ENCODE measurements at regions of chr5 and their contacts with region 1.

Region 1: DNA sequence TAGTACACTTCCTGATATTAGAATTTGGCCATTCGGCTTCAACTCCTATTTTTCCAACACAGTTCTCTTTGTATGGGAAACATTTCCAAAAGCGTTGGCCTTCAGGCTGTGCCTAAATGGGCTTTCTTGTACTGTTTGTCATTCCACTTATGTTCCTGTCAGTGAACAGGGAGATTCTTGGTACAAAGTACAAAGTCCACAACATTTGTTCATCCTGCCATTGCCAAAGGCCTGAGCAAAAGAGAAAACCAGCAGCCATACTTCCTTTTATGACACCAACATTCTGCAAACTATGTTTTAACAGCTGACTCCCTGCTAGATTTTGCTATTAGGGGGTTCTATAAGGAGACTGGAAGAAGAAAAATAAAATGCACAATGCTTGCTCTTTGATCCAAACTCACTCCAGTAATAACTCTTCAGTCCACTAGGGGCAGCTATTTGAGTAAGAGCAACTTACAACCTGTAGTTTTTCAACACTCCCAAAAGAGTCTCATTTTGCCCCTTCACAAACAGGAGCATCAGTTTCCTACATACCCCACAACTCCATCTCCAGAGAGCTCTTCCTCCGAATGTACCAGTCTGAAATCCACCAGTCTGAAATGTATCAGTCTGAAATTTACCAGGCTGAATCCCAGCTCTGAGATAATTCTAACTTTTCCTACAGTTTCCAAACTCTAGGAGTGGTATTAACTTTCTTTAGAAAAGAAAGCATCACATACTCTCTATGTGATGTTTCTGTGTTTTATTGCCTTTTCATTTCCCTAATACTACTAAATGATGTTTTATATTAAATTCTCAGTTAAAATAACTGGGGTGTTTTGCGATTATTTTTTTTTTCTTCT is 693.8 kb downstream of the DNAH5 start:
- DNase-seq: peak; percentile 39
- H3K4me3 ChIP-seq: no peak overlapping the region
- H3K27ac ChIP-seq: peak overlapping the region; percentile 94
- H3K4me1 ChIP-seq: peaks cover 44% of the 10 kb centered on the region
- H3K27me3 ChIP-seq: no peaks in the 10 kb centered on the region
- CTCF ChIP-seq: peak; percentile 51 to 58
- POLR2A ChIP-seq: no peak

Region 2: DNA sequence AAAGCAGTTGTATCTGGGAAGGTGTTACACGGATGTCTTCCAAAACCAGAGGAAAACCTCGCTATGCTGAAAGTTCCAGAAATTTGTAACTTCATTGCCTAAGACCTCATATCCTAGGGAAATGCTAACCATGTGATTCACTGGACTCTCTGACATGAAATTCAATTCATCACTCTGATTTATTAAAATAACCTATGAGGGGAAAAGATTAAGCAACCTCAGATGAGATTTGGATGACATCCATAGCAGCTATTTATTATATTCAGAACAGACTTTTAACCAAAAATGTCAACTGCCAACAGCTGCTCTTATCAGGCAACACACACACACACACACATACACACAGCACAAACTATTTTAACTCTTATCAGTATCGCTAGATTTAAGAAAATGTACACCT is 340.0 kb before region 1 on chr5:
- CTCF ChIA-PET with region 1: interaction called, 5 read pairs
- POLR2A ChIA-PET with region 1: no interaction called
- dilution Hi-C with region 1: no loop called
- intact Hi-C with region 1: loop called (anchors 1 kb)
- DNase-seq: peak; percentile 84
- H3K4me3 ChIP-seq: no peak overlapping the region
- H3K27ac ChIP-seq: peak overlapping the region; percentile 70
- H3K4me1 ChIP-seq: peaks cover 14% of the 10 kb centered on the region
- H3K27me3 ChIP-seq: no peaks in the 10 kb centered on the region
- CTCF ChIP-seq: no peak
- POLR2A ChIP-seq: no peak

Region 3: DNA sequence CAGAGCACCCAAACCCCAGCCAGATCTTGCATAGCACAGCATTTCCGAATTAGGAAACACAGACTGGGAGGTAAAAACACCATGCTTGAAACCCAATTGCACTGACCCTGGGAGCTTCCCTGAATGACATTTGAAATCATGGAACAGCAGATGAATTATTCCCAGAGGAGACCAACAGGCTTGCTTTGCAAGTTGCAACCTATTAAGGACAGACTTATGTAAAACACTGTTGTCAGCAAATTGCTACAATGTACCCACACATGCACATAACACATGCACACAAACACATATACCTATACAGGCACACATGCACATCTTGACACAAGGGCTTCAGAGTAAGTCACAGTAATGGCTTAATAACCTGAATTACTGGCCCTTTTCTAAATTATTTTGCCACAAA is 291.0 kb before region 1 on chr5:
- CTCF ChIA-PET with region 1: no interaction called
- POLR2A ChIA-PET with region 1: no interaction called
- dilution Hi-C with region 1: no loop called
- intact Hi-C with region 1: no loop called
- DNase-seq: no peak
- H3K4me3 ChIP-seq: no peak overlapping the region
- H3K27ac ChIP-seq: no peak overlapping the region
- H3K4me1 ChIP-seq: no peaks in the 10 kb centered on the region
- H3K27me3 ChIP-seq: no peaks in the 10 kb centered on the region
- CTCF ChIP-seq: no peak
- POLR2A ChIP-seq: no peak

Region 4: GRCh38 chr5:13218518-13218917 is 32.2 kb before region 1 on chr5:
- CTCF ChIA-PET with region 1: interaction called, 3 read pairs
- POLR2A ChIA-PET with region 1: no interaction called
- dilution Hi-C with region 1: no loop called
- intact Hi-C with region 1: loop called (anchors 1 kb)
- DNase-seq: peak; percentile 19
- H3K4me3 ChIP-seq: no peak overlapping the region
- H3K27ac ChIP-seq: no peak overlapping the region
- H3K4me1 ChIP-seq: no peaks in the 10 kb centered on the region
- H3K27me3 ChIP-seq: no peaks in the 10 kb centered on the region
- CTCF ChIP-seq: peak; percentile 33 to 55
- POLR2A ChIP-seq: no peak

Region 5: GRCh38 chr5:13536921-13537320 is 286.2 kb after region 1 on chr5:
- CTCF ChIA-PET with region 1: no interaction called
- POLR2A ChIA-PET with region 1: no interaction called
- dilution Hi-C with region 1: no loop called
- intact Hi-C with region 1: no loop called
- DNase-seq: no peak
- H3K4me3 ChIP-seq: no peak overlapping the region
- H3K27ac ChIP-seq: no peak overlapping the region
- H3K4me1 ChIP-seq: no peaks in the 10 kb centered on the region
- H3K27me3 ChIP-seq: no peaks in the 10 kb centered on the region
- CTCF ChIP-seq: no peak
- POLR2A ChIP-seq: no peak

Region 6: DNA sequence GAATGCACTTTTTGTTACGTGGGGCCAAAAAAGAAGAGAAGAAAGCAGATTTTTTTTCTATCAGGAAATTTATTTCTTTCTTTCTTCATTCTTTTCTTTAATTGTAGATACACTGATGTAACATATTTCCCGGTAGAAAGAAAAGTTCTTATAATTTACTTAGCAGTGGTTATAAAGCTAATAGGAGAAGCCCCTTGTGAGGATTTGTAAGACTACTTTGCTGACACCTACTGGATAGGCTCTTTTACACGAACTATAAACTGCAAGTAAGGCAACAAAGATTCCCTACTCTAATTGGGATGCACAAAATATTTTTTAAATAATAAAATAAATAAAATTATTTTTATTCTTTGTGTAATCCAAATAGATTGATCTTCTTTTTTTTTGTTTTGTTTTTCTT is 409.4 kb after region 1 on chr5:
- CTCF ChIA-PET with region 1: no interaction called
- POLR2A ChIA-PET with region 1: no interaction called
- dilution Hi-C with region 1: no loop called
- intact Hi-C with region 1: loop called (anchors 5 kb)
- DNase-seq: peak; percentile 17
- H3K4me3 ChIP-seq: no peak overlapping the region
- H3K27ac ChIP-seq: no peak overlapping the region
- H3K4me1 ChIP-seq: peaks cover 10% of the 10 kb centered on the region
- H3K27me3 ChIP-seq: no peaks in the 10 kb centered on the region
- CTCF ChIP-seq: no peak
- POLR2A ChIP-seq: no peak